KBM-7 (cell line): ENCODE measurements at regions of chr6 and their contacts with region 1.

Region 1: GRCh38 chr6:149431905-149432775 is 32.1 kb downstream of the SUMO4 start:
- DNase-seq: peak; percentile 88

Region 2: DNA sequence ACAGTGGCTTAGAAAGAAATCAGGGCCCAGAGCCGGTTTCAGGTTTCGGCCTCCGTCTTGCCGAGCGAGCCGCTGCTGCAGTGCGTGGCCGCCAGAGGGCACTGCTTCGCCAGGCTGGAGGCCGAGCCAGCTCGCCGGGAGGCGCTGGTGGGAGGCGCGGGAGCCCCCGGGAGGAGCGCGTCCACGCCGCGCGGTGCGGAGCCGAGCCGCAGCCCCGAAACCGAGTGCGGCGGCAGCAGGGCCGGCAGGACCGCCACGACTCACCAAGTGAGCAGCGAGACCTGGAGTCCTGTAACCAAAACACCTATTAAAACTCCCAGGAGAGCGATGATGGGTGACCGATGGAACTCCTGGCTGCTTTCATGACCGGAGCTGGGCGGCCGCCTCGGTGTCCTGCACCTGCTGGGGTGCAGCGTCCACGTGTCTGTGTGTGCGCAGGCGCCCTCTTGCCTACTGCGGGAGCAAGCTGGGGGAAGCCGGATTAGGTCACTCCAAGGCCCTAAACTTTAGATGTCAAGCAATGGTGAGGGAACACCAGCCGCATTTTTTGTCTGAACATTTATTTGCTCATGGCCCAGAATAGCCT is 872.2 kb before region 1 on chr6:
- in situ Hi-C with region 1: loop called (anchors 25 kb)
- DNase-seq: peak; percentile 69

Region 3: DNA sequence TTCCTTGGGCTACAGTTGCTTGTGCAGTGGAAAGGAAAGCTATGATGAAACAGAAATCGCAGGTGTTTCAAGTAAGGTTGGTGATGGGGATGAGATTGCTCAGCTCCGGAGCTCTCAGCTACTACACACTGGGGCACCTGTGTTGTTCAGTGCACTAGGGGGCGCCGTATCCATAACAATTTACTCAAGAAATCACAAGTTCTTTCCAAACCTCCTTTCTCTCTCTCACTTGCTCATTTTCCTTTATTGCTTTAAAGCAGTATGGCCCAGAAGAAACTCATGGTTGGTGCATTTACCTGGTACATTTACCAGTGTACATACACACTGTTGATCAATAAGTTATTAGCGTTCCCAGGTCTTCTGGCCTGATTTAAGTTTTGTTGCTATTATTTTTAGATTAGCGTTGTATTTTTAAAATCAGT is 349.8 kb before region 1 on chr6:
- in situ Hi-C with region 1: loop called (anchors 25 kb)
- DNase-seq: peak; percentile 73

Region 4: DNA sequence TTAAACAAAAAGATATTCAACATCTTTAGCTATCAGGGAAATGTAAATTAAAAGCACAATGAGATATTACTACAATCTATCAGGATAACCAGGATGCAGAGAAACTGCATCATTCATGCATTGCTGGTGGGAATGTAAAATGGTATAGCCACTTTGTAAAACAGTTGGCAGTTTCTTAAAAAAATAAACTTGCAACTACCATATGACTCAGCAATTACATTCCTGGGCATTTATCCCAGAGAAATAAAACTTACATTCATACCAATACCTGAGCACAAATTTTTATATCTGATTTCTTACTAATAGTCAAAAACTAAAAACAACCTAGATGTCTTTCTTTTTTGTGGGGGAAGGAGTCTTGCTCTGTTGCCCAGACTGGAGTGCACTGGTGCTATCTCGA is 304.9 kb before region 1 on chr6:
- in situ Hi-C with region 1: no loop called
- DNase-seq: no peak